Sciatic nerve (tissue), 2 donors: ENCODE measurements at regions of chr17 and their contacts with region 1.

Region 1: GRCh38 chr17:2547176-2547575 is 35.5 kb upstream of the METTL16 start:
- DNase-seq: no peak
- ATAC-seq: no peak

Region 2: GRCh38 chr17:2564878-2565277 is 17.7 kb after region 1 on chr17:
- intact Hi-C with region 1: no loop called
- DNase-seq: no peak
- ATAC-seq: no peak

Region 3: GRCh38 chr17:4297351-4297750 is 1750.2 kb after region 1 on chr17:
- intact Hi-C with region 1: loop called (anchors 5 kb)
- DNase-seq: no peak
- ATAC-seq: no peak